Tibial artery (tissue), 4 donors: ENCODE measurements at regions of chr9 and their contacts with region 1.

Region 1: DNA sequence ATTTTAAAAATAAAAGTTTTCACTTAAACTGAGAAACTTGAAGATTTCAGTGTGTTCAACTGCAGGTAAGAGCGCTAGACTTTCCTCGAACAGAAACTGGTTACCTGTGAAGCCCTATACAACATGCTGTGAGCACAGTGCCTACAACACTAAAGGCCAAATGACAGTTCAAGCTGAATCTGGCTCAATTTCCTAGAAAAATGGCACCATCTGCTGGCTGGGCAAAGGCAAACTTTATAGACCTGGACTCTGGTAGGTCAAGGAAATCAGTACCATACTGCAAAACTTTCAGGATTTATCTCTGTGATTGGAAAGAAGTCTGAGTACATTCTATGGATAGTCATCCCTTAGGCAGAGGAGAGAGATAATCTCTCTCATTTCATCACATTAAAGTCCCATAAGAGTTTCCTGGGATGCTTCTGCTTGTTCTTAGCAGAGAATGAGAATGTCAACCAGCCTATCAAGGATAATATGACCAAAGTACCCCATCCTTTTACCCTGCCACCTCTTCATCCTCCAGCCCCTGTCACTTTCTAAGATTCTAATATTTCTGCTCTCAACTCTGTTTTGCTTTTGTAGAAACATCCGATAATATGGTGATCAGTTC is 31.8 kb upstream of the FOXB2 start:
- DNase-seq: no peak
- H3K4me3 ChIP-seq: no peak overlapping the region
- H3K27ac ChIP-seq: no peak overlapping the region
- H3K4me1 ChIP-seq: peaks cover 0 to 11% (median 0%) of the 10 kb centered on the region in 4 donors
- H3K27me3 ChIP-seq: no peaks in the 10 kb centered on the region
- CTCF ChIP-seq: peak; percentile 46 to 54

Region 2: DNA sequence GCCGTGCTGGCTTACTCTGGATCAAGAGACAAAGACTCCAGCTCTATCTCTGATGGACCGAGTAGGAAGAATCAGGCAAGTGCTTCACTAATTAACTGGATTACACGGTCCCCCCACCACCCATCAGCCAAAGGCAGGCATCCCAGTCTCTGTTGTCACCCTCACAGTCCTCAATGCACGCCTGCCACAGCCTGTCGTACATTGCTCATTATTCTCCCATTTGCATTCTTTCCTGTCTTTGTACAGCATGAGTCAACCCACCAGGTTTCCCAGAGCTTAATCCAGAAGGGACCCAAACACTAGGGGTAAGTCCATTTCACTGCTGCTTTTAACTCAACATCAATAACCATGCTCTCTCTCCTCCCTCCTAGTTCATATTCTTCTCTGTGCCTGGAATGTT is 179.1 kb before region 1 on chr9:
- intact Hi-C with region 1: loop called (anchors 5 kb)
- DNase-seq: no peak
- H3K4me3 ChIP-seq: no peak overlapping the region
- H3K27ac ChIP-seq: no peak overlapping the region
- H3K4me1 ChIP-seq: peaks cover 0 to 13% (median 0%) of the 10 kb centered on the region in 4 donors
- H3K27me3 ChIP-seq: no peaks in the 10 kb centered on the region
- CTCF ChIP-seq: no peak

Region 3: DNA sequence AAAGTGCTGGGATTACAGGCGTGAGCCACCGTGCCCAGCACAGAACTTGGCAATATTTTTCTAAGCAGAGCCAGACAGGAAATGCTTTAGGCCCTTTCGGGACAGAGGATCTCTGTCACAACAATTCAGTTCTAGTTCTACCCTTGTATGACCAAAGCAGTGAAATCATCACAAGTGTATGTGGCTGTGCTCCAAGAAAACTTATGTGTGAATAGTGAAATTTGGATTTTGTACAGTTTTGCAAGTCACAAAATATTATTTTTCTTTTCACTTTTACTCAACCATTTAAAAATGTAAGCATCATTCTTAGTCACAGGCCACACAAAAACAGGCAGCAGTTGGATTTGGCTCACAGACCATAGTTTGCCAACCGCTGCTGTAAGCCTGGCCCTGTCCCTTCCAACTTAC is 61.4 kb before region 1 on chr9:
- intact Hi-C with region 1: loop called (anchors 5 kb)
- DNase-seq: peak; percentile 34 to 75
- H3K4me3 ChIP-seq: no peak overlapping the region
- H3K27ac ChIP-seq: peak overlapping the region; percentile 59 to 68
- H3K4me1 ChIP-seq: peaks cover 0 to 14% (median 4%) of the 10 kb centered on the region in 4 donors
- H3K27me3 ChIP-seq: no peaks in the 10 kb centered on the region
- CTCF ChIP-seq: no peak

Region 4: GRCh38 chr9:76943054-76943453 is 44.6 kb before region 1 on chr9:
- intact Hi-C with region 1: no loop called
- DNase-seq: no peak
- H3K4me3 ChIP-seq: no peak overlapping the region
- H3K27ac ChIP-seq: no peak overlapping the region
- H3K4me1 ChIP-seq: no peaks in the 10 kb centered on the region
- H3K27me3 ChIP-seq: no peaks in the 10 kb centered on the region
- CTCF ChIP-seq: no peak

Region 5: GRCh38 chr9:77005216-77005615 is 17.5 kb after region 1 on chr9:
- intact Hi-C with region 1: no loop called
- DNase-seq: no peak
- H3K4me3 ChIP-seq: no peak overlapping the region
- H3K27ac ChIP-seq: no peak overlapping the region
- H3K4me1 ChIP-seq: no peaks in the 10 kb centered on the region
- H3K27me3 ChIP-seq: peaks cover 0 to 46% of the 10 kb centered on the region in 2 donors
- CTCF ChIP-seq: no peak

Region 6: DNA sequence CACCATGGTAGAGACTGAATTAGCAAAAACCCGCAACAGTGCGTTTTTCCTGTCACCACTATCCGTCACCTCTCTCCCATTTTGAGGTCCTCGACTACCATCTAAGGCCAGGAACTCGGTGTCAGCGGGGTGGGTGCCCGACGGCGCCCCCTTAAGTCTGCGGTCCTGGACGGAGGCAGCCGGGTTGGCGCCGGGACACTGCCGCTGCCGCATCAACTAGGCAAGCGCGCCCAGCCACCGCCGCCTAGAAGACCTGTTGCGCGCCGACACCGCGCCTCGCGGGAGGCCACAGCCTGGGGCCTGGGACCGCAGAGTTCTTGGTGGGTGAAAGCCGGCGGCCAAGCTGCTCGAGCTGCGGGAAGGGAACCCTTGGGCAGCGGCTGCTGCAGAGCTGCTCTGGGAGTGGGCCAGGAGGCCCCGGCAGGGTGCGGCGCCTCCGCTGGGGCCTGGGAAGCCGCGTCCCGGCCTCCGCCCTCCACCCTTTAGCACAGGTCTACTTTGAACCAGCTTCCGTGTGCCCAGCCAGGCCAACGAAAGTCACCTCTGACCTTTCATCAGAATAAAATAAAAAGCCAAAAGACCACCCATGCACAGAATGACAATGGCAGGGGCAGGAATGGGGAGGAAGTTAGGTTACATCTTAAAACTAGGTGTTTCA is 35.2 kb after region 1 on chr9:
- intact Hi-C with region 1: no loop called
- DNase-seq: no peak
- H3K4me3 ChIP-seq: no peak overlapping the region
- H3K27ac ChIP-seq: no peak overlapping the region
- H3K4me1 ChIP-seq: peaks cover 0 to 45% (median 29%) of the 10 kb centered on the region in 4 donors
- H3K27me3 ChIP-seq: peaks cover 3 to 90% of the 10 kb centered on the region in 2 donors
- CTCF ChIP-seq: no peak